PC-3 (cell line): ENCODE measurements at regions of chr4 and their contacts with region 1.

Region 1: GRCh38 chr4:124432500-124432899 is 280.0 kb downstream of the ANKRD50 start:
- DNase-seq: peak; percentile 93
- ATAC-seq: peak; percentile 57
- H3K4me3 ChIP-seq: peak overlapping the region; percentile 10; the same call in 1 of the 2 replicates
- H3K27ac ChIP-seq: peak overlapping the region; percentile 89
- H3K4me1 ChIP-seq: peaks cover 75% of the 10 kb centered on the region
- H3K27me3 ChIP-seq: no peaks in the 10 kb centered on the region
- CTCF ChIP-seq: no peak

Region 2: DNA sequence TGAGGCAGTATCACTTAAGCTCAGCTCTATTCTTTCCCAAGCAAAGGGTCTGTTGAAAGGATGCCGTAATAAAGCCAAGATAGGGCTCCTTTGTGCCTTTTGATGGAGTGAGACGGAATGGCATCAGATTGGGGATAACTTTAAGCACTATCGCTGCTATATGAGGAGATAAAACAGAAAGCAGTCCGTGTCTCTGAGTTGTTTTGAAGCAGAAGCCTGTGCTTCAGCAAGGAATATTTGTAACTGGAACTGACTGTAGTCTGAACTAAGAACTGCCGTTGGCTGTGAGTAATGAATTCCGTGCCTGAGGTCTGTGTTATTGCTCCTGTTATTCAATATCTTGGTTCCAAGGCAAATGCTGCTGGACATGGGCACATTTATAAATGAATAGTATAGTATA is 17.4 kb before region 1 on chr4:
- CTCF ChIA-PET with region 1: no interaction called
- POLR2A ChIA-PET with region 1: interaction called, 3 read pairs
- intact Hi-C with region 1: loop called (anchors 1 kb)
- DNase-seq: peak; percentile 8
- ATAC-seq: no peak
- H3K4me3 ChIP-seq: no peak overlapping the region
- H3K27ac ChIP-seq: peak overlapping the region; percentile 96
- H3K4me1 ChIP-seq: peaks cover 49% of the 10 kb centered on the region
- H3K27me3 ChIP-seq: no peaks in the 10 kb centered on the region
- CTCF ChIP-seq: no peak

Region 3: DNA sequence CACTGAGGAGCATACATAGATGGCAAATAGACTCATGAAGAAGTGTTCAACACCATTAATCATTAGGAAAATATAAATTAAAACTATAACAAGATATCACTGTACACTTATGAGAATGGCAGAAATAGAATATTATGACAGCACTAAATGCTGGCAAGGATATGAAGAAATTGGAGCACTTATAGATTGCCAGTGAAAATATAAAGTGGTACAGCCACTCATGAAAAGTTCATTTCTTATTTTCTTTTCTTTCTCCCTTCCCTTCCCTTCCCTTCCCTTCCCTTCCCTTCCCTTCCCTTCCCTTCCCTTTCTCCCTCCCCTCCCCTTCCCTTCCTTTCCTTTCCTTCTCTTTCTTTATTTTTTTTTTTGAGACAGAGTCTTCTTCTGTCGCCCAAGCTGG is 226.3 kb after region 1 on chr4:
- CTCF ChIA-PET with region 1: no interaction called
- POLR2A ChIA-PET with region 1: no interaction called
- intact Hi-C with region 1: no loop called
- DNase-seq: no peak
- ATAC-seq: no peak
- H3K4me3 ChIP-seq: no peak overlapping the region
- H3K27ac ChIP-seq: no peak overlapping the region
- H3K4me1 ChIP-seq: no peaks in the 10 kb centered on the region
- H3K27me3 ChIP-seq: no peaks in the 10 kb centered on the region
- CTCF ChIP-seq: no peak

Region 4: GRCh38 chr4:124712372-124713184 is 280.1 kb after region 1 on chr4 and contains the start of gene ANKRD50:
- CTCF ChIA-PET with region 1: no interaction called
- POLR2A ChIA-PET with region 1: no interaction called
- intact Hi-C with region 1: loop called (anchors 1 kb)
- DNase-seq: peak; percentile 82
- ATAC-seq: peak; percentile 59
- H3K4me3 ChIP-seq: peak within 1 kb of the TSS; percentile 92
- H3K27ac ChIP-seq: peak within 1 kb of the TSS; percentile 93
- H3K4me1 ChIP-seq: peaks cover 29% of the 10 kb centered on the region
- H3K27me3 ChIP-seq: no peaks in the 10 kb centered on the region
- CTCF ChIP-seq: no peak
- total RNA-seq, gene ANKRD50: 26.3 and 29.3 TPM in 2 replicates

Region 5: DNA sequence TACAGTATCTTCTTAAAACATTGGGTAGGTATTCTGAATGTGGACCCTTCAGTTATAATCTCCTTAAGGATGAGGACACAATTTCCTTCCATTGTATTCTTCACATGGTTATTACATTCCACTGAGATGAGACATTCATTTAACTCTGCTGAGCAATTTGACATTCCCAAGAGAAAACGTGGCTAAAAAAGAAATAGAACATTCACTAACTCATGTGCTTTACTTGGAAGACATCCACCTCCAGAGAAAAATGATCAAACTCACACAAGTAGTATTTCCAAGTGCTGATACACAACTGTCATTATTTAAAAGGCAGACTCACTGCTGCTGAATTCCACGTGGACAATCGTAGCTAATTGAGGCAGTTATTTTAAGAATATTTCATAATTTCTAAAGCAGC is 507.9 kb after region 1 on chr4:
- CTCF ChIA-PET with region 1: no interaction called
- POLR2A ChIA-PET with region 1: interaction called, 6 read pairs
- intact Hi-C with region 1: loop called (anchors 5 kb)
- DNase-seq: peak; percentile 88
- ATAC-seq: peak; percentile 37
- H3K4me3 ChIP-seq: no peak overlapping the region
- H3K27ac ChIP-seq: peak overlapping the region; percentile 98
- H3K4me1 ChIP-seq: peaks cover 66% of the 10 kb centered on the region
- H3K27me3 ChIP-seq: no peaks in the 10 kb centered on the region
- CTCF ChIP-seq: no peak

Region 6: GRCh38 chr4:125244848-125245450 is 812.4 kb after region 1 on chr4:
- CTCF ChIA-PET with region 1: no interaction called
- POLR2A ChIA-PET with region 1: no interaction called
- intact Hi-C with region 1: loop called (anchors 5 kb)
- DNase-seq: peak; percentile 46
- ATAC-seq: peak; percentile 40
- H3K4me3 ChIP-seq: no peak overlapping the region; the same call in 1 of the 2 replicates
- H3K27ac ChIP-seq: no peak overlapping the region
- H3K4me1 ChIP-seq: peaks cover 14% of the 10 kb centered on the region
- H3K27me3 ChIP-seq: no peaks in the 10 kb centered on the region
- CTCF ChIP-seq: peak; percentile 67